ENCODE measurements at regions of chr1 and their contacts with region 1.

Region 1: GRCh38 chr1:160193091-160193819 is 2.9 kb downstream of the CASQ1 start:
- DNase-seq: peak; percentile 78 to 89
- ATAC-seq: peak; percentile 85 to 99 (median 97)
- H3K4me3 ChIP-seq: no peak overlapping the region
- H3K4me3 Mint-ChIP-seq: no peak overlapping the region
- H3K27ac ChIP-seq: no peak overlapping the region
- H3K27ac Mint-ChIP-seq: no peak overlapping the region
- H3K4me1 ChIP-seq: peaks cover 7% of the 10 kb centered on the region
- H3K4me1 Mint-ChIP-seq: no peaks in the 10 kb centered on the region
- H3K27me3 ChIP-seq: no peaks in the 10 kb centered on the region
- H3K27me3 Mint-ChIP-seq: peaks cover 0 to 2% of the 10 kb centered on the region in 2 donors
- CTCF ChIP-seq: peak; percentile 88

Region 2: GRCh38 chr1:160098852-160099561 is 94.2 kb before region 1 on chr1:
- intact Hi-C with region 1: no loop called
- DNase-seq: peak; percentile 89 to 97
- ATAC-seq: peak; percentile 85 to 93 (median 88)
- H3K4me3 ChIP-seq: peak overlapping the region; percentile 39
- H3K4me3 Mint-ChIP-seq: peak overlapping the region; percentile 78
- H3K27ac ChIP-seq: peak overlapping the region; percentile 87
- H3K27ac Mint-ChIP-seq: peak overlapping the region; percentile 84 to 89
- H3K4me1 ChIP-seq: peaks cover 45% of the 10 kb centered on the region
- H3K4me1 Mint-ChIP-seq: peaks cover 39 to 56% of the 10 kb centered on the region in 2 donors
- H3K27me3 ChIP-seq: no peaks in the 10 kb centered on the region
- H3K27me3 Mint-ChIP-seq: peaks cover 0 to 2% of the 10 kb centered on the region in 2 donors
- CTCF ChIP-seq: no peak

Region 3: DNA sequence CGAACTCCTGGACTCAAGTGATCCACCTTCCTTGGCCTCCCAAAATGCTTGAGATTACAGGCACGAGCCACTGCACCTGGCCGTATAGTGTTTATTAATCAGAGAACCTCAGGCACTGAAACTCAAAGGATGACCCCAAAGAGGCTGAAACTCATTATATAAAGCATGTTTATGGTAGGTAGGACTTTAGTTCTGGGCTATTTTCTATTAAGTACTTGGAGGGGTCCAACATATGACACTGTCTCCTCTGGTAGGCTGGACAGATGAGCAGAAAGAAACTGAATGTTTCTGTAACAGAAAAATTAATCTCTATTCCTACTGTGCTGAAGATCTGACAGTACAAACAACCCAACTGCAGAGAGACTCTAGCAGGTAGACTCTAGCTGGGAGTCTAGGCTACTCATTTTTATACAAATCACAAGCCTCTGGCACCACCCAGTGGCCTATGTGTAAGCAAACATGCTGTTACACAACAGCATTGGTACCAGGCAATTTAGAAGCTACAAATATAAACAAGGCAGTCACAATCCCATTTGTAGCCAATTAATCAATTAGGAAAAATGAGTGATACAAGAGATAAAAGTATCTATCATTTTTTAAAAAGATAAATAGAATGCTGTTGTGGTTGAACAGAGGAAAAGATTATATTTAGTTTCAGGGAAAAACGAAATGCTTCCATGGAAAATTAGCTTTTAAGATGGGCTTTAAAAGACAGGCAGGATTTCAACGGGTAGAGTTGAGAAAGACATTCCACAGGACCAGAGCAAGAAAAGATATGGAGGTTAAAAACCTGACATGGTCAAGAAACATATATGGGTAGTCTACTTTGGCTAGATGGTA is 58.7 kb after region 1 on chr1:
- intact Hi-C with region 1: loop called (anchors 1 kb)
- DNase-seq: peak; percentile 33 to 79
- ATAC-seq: peak; percentile 87 to 99 (median 93)
- H3K4me3 ChIP-seq: no peak overlapping the region
- H3K4me3 Mint-ChIP-seq: no peak overlapping the region
- H3K27ac ChIP-seq: no peak overlapping the region
- H3K27ac Mint-ChIP-seq: peak overlapping the region; percentile 2 to 76
- H3K4me1 ChIP-seq: no peaks in the 10 kb centered on the region
- H3K4me1 Mint-ChIP-seq: peaks cover 6 to 26% of the 10 kb centered on the region in 2 donors
- H3K27me3 ChIP-seq: no peaks in the 10 kb centered on the region
- H3K27me3 Mint-ChIP-seq: no peaks in the 10 kb centered on the region
- CTCF ChIP-seq: peak; percentile 61

Region 4: GRCh38 chr1:160291248-160292220 is 98.3 kb after region 1 on chr1:
- intact Hi-C with region 1: loop called (anchors 1 kb)
- DNase-seq: peak; percentile 43 to 89
- ATAC-seq: peak; percentile 90 to 97 (median 93)
- H3K4me3 ChIP-seq: no peak overlapping the region
- H3K4me3 Mint-ChIP-seq: no peak overlapping the region
- H3K27ac ChIP-seq: no peak overlapping the region
- H3K27ac Mint-ChIP-seq: peak overlapping the region; percentile 49 to 59
- H3K4me1 ChIP-seq: no peaks in the 10 kb centered on the region
- H3K4me1 Mint-ChIP-seq: no peaks in the 10 kb centered on the region
- H3K27me3 ChIP-seq: no peaks in the 10 kb centered on the region
- H3K27me3 Mint-ChIP-seq: no peaks in the 10 kb centered on the region
- CTCF ChIP-seq: peak; percentile 79

Region 5: GRCh38 chr1:161045750-161046571 is 852.7 kb after region 1 on chr1 and contains the start of gene USF1:
- intact Hi-C with region 1: no loop called
- DNase-seq: peak; percentile 93 to 98
- ATAC-seq: peak; percentile 79 to 92 (median 87)
- H3K4me3 ChIP-seq: peak within 1 kb of the TSS; percentile 90
- H3K4me3 Mint-ChIP-seq: peak within 1 kb of the TSS; percentile 97
- H3K27ac ChIP-seq: peak within 1 kb of the TSS; percentile 88
- H3K27ac Mint-ChIP-seq: peak within 1 kb of the TSS; percentile 98 to 99
- H3K4me1 ChIP-seq: peaks cover 35% of the 10 kb centered on the region
- H3K4me1 Mint-ChIP-seq: peaks cover 37 to 72% of the 10 kb centered on the region in 2 donors
- H3K27me3 ChIP-seq: no peaks in the 10 kb centered on the region
- H3K27me3 Mint-ChIP-seq: no peaks in the 10 kb centered on the region
- CTCF ChIP-seq: no peak
- total RNA-seq, gene USF1: 113 to 121 (median 114) TPM

Measured in natural killer cell (primary cell).